ENCODE measurements at regions of chr11 and their contacts with region 1.

Region 1: DNA sequence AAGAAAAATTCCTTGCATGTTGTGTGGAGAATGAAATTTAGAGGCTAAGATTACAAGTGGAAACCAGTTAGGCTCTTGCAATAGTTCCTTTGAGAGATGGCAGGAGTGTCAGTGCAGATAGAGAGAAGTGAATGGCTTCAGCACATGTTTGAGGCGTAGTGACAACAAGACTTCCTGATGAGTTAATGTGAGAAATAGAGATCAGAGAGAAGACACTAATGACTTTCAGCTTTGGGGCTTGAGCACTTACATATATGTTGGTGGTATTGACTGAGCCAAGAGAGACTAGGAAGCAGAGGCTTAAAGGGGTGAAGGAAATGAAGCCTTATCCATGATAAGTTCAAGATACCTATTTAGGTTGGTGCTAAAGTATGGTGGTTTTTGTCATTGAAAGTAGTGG is 56.0 kb upstream of the PICALM start:
- DNase-seq: no peak
- H3K4me3 ChIP-seq: peak overlapping the region; percentile 0; the same call in 1 of the 2 replicates
- H3K4me3 Mint-ChIP-seq: peak overlapping the region; percentile 57
- H3K27ac Mint-ChIP-seq: peak overlapping the region; percentile 60
- H3K4me1 ChIP-seq: peaks cover 94% of the 10 kb centered on the region
- H3K4me1 Mint-ChIP-seq: peaks cover 63% of the 10 kb centered on the region
- H3K27me3 ChIP-seq: no peaks in the 10 kb centered on the region
- H3K27me3 Mint-ChIP-seq: no peaks in the 10 kb centered on the region
- CTCF ChIP-seq: no peak

Region 2: DNA sequence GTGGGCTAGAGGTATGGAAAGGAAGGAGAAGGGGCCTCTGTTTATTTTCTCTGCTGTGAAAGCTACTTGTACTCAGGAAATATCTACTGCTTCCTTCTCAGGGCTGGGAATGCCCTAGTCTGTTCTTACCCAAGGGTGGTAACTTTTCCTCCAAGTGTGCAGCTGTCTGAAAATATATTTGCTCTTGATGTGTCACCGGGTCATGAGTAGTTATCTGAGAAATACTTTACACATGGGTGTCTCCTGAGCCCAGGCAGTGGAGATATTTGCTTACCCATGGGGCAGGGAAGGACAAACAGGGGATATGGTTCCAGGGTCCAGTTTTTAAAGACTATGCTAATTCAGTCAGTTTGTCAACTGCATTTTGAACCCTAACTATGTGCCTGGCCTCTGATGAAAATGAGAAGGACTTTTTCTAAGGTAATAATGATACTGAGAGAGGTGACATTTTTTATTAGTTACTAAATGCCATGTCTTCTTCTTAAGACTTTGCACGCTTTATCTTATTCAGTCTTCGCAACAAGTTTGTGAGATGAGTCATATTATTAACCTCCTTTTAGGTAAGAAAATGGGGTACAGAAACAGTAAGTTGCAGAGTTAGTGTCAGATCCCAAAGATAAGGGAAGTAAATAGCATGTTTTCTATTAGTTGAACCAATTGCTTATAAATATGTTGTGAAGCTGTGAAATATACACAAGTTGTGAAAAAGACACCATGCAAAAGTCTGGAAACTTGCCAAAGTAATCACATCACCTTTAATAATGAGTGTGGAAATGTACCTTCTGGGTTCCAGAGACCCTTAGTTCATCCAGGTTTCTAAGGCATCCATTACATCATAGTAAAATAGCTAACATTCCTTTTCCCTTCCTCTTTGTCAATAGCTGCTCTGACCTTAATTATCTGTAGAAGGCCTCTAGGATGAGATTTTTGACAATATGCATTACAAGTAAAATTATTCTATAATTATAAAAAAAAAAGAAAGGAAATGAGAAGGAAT is 336.7 kb before region 1 on chr11:
- CTCF ChIA-PET with region 1: no interaction called
- POLR2A ChIA-PET with region 1: no interaction called
- intact Hi-C with region 1: loop called (anchors 10 kb)
- DNase-seq: peak; percentile 79 to 91
- H3K4me3 ChIP-seq: no peak overlapping the region
- H3K4me3 Mint-ChIP-seq: peak overlapping the region; percentile 61
- H3K27ac Mint-ChIP-seq: peak overlapping the region; percentile 86
- H3K4me1 ChIP-seq: peaks cover 69% of the 10 kb centered on the region
- H3K4me1 Mint-ChIP-seq: peaks cover 62% of the 10 kb centered on the region
- H3K27me3 ChIP-seq: no peaks in the 10 kb centered on the region
- H3K27me3 Mint-ChIP-seq: no peaks in the 10 kb centered on the region
- CTCF ChIP-seq: no peak

Region 3: DNA sequence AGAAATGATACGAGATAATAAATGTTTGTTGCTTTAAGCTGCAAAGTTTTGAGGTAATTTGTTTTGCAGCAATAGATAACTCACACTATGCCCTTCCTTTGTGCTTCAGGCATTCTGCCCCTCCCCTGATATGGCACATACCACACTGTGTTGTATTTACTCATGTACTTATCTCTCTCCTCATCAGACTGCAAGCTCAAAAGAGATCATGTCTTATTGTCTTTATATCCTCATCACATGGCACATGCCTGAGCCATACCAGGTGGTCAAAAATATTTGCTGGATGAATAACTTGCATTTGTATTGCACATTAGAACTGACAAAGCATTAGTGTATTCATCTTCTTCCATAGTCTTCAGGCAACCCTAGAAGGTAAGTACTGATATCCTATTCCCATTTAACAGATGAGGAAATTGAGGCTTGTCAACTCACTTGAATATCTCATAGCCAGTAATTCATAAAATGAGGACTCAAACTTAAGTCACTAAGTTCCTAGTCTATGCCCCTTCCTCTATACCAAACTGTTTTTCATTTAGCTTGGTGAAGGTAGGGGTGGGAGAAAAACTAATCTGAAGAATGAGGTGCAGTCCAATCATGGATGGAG is 35.8 kb after region 1 on chr11:
- CTCF ChIA-PET with region 1: no interaction called
- POLR2A ChIA-PET with region 1: no interaction called
- intact Hi-C with region 1: loop called (anchors 1 kb)
- DNase-seq: peak; percentile 83 to 89
- H3K4me3 ChIP-seq: no peak overlapping the region
- H3K4me3 Mint-ChIP-seq: no peak overlapping the region
- H3K27ac Mint-ChIP-seq: peak overlapping the region; percentile 7
- H3K4me1 ChIP-seq: peaks cover 67% of the 10 kb centered on the region
- H3K4me1 Mint-ChIP-seq: peaks cover 62% of the 10 kb centered on the region
- H3K27me3 ChIP-seq: no peaks in the 10 kb centered on the region
- H3K27me3 Mint-ChIP-seq: no peaks in the 10 kb centered on the region
- CTCF ChIP-seq: no peak

Region 4: GRCh38 chr11:86230921-86231430 is 106.1 kb after region 1 on chr11:
- CTCF ChIA-PET with region 1: no interaction called
- POLR2A ChIA-PET with region 1: no interaction called
- intact Hi-C with region 1: no loop called
- DNase-seq: no peak
- H3K4me3 ChIP-seq: no peak overlapping the region
- H3K4me3 Mint-ChIP-seq: no peak overlapping the region
- H3K27ac Mint-ChIP-seq: no peak overlapping the region
- H3K4me1 ChIP-seq: peaks cover 13% of the 10 kb centered on the region
- H3K4me1 Mint-ChIP-seq: peaks cover 24% of the 10 kb centered on the region
- H3K27me3 ChIP-seq: no peaks in the 10 kb centered on the region
- H3K27me3 Mint-ChIP-seq: no peaks in the 10 kb centered on the region
- CTCF ChIP-seq: no peak